ENCODE measurements at regions of chr13 and their contacts with region 1.

Region 1: DNA sequence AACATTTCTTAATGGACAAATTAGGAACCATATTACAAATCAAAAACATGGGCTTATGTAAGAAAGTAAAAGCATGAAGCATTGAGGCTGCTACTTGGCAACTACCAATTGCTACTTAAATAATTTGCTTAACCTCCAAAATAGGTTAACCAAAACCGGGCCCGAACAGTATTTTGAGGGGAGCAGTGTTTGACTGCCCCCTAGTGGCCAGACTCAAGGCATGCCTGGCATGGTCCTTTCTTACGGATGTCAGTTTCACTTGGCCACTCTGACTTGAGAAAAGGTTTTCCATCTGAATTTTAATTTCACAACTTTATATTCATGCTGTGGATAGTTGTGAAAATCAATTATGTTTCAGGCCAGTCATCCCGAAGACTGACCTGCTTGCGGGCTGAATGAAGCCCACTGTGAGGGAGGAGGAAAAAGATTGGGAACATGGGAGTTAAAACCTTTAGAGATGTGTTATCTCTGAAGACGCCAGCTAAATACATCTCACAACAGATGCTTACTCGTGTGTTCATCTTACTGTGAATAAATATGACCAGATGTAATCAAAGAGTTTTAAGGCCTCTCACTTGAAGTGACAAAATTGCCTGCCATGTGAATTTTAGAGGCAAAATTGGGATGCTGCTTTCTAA is 2.9 kb downstream of the RXFP2 start:
- ATAC-seq: peak in 7 of 8 experiments; percentile 51 to 88 (median 73)
- H3K4me3 ChIP-seq: no peak overlapping the region
- H3K27ac ChIP-seq: no peak overlapping the region
- H3K4me1 ChIP-seq: no peaks in the 10 kb centered on the region

Region 2: GRCh38 chr13:31174018-31174417 is 568.2 kb before region 1 on chr13:
- in situ Hi-C with region 1: no loop called
- ATAC-seq: peak in 1 of 8 experiments; percentile 56
- H3K4me3 ChIP-seq: no peak overlapping the region
- H3K27ac ChIP-seq: no peak overlapping the region
- H3K4me1 ChIP-seq: no peaks in the 10 kb centered on the region

Region 3: GRCh38 chr13:31409678-31410356 is 332.4 kb before region 1 on chr13:
- in situ Hi-C with region 1: no loop called
- ATAC-seq: peak in 1 of 8 experiments; percentile 17
- H3K4me3 ChIP-seq: no peak overlapping the region
- H3K27ac ChIP-seq: no peak overlapping the region
- H3K4me1 ChIP-seq: no peaks in the 10 kb centered on the region

Region 4: DNA sequence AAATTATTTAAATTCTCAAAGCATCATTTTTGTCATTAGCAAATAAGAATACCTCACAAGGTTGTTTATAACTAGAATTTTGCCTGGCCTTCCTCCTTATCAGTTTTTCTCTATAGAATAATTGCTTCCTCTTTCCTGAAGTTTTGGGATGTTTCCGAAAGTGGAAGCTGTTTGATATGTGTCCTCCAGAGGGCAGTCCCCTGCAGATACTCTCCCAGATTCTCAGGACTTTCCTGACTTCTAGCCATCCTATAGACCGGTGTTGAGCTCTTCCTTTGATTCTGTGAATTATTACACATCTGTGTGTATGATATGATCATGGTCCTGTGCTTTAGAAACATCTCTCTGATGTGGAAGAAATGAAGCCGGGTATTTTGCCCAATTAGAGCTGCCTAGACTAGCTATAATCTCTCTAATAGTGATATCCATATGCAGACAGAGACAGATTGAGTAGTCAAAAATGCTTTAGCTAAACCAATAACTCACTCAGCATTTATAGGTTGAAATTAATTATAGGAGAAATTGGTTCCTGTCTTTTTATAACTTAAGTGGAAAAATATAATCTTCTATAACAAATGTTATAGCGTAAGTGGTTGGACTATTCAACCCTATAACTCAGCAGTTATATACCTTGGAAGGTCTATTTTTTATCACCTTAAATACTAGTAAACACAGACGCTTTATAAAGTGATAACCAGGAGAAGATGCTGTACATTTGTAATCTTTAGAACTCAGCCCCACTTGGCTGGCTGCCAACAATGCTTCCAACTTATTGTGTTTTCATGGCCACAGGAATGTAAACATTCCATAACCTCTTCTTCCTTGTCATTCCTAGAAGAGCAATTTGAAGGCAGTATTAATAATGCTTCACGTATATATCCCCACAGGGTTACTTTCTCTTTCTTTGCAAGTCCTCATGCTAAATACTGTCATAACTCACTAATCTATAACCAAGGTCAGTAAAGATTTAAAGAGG is 203.9 kb before region 1 on chr13:
- in situ Hi-C with region 1: loop called in 3 of 9 experiments (anchors 25 kb)
- ATAC-seq: peak in 3 of 8 experiments; percentile 32 to 75 (median 70)
- H3K4me3 ChIP-seq: no peak overlapping the region
- H3K27ac ChIP-seq: no peak overlapping the region
- H3K4me1 ChIP-seq: peaks cover 10 to 21% of the 10 kb centered on the region in 2 donors

Measured in motor neuron (in vitro differentiated cells).